PC-9 (cell line): ENCODE measurements at regions of chr2 and their contacts with region 1.

Region 1: GRCh38 chr2:96116879-96117697 is 717 bp upstream of the ADRA2B start:
- DNase-seq: peak in 1 of 2 experiments; percentile 74
- H3K4me3 ChIP-seq: peak overlapping the region; percentile 55; the same call in 1 of the 2 replicates
- H3K27ac ChIP-seq: no peak overlapping the region
- H3K4me1 ChIP-seq: peaks cover 5% of the 10 kb centered on the region; the same call in 1 of the 2 replicates
- H3K27me3 ChIP-seq: peaks cover 58% of the 10 kb centered on the region
- CTCF ChIP-seq: peak; percentile 62

Region 2: DNA sequence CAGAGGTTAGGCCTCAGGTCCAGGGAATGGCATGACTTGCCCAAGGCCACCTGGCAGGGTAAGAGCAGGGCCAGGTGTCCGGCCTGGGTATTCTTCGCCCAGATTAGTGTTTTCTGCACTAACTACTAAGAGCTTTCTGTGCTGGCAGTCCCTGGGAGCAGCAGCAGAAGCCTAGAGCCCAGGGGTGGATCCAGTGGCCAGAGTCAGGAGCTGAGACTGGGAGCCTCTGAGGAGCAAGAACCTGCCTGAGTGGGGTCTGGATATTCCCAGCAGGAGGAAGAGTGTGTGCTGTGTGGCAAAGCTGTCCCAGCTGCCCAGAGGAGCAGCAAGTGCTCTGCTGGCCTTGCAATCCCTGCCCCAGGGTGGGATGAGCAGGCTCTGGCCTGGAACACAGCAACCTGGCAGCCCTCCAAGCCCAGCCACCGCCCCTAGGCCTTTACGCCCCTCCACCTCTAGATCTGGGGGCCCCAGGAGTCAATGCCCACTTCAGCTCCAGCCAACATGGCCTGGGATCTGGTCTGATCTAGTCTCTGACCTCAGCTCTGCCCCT is 51.6 kb before region 1 on chr2:
- CTCF ChIA-PET with region 1: interaction called, 3 read pairs
- POLR2A ChIA-PET with region 1: no interaction called
- intact Hi-C with region 1: loop called (anchors 2 kb)
- DNase-seq: no peak
- H3K4me3 ChIP-seq: no peak overlapping the region
- H3K27ac ChIP-seq: no peak overlapping the region
- H3K4me1 ChIP-seq: peaks cover 13% of the 10 kb centered on the region; the same call in 1 of the 2 replicates
- H3K27me3 ChIP-seq: no peaks in the 10 kb centered on the region
- CTCF ChIP-seq: no peak

Region 3: DNA sequence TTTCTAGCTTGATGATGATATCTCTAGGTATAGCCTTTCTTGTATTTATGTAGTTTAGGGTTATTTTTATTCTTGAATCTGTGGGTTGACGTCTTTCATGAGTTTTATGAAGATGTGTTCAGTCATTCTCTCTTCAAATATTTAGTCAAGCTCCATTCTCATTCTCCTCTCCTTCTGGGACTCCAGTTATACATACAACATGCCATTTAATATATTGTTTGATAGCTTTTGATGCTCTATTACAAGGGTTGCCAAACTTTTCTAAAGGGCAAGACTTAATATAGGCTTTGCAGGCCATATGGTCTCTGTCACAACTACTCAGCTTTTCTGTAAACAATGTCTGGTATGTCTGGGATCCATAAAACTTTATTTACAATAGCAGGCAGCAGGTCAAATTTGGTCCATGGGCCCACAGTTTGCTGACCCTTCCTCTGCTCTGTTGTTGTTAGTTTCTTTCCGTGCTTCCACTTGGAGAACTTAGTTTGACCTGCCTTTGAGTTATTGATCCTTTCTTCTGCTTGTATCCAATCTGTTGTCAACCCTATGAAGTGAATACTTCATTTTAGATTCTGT is 41.8 kb before region 1 on chr2:
- CTCF ChIA-PET with region 1: no interaction called
- POLR2A ChIA-PET with region 1: no interaction called
- intact Hi-C with region 1: loop called (anchors 5 kb)
- DNase-seq: peak in 1 of 2 experiments; percentile 8
- H3K4me3 ChIP-seq: no peak overlapping the region
- H3K27ac ChIP-seq: no peak overlapping the region
- H3K4me1 ChIP-seq: no peaks in the 10 kb centered on the region
- H3K27me3 ChIP-seq: peaks cover 20% of the 10 kb centered on the region; the same call in 1 of the 2 replicates
- CTCF ChIP-seq: no peak